Sigmoid colon (tissue), 7 donors: ENCODE measurements at regions of chr6 and their contacts with region 1.

Region 1: GRCh38 chr6:31271641-31272357 is at the start of gene HLA-C:
- DNase-seq: peak; percentile 98
- H3K4me3 ChIP-seq: peak within 1 kb of the TSS; percentile 49 to 95 (median 82)
- H3K27ac ChIP-seq: peak within 1 kb of the TSS; percentile 76 to 98 (median 96)
- H3K4me1 ChIP-seq: peaks cover 0 to 12% (median 3%) of the 10 kb centered on the region in 4 donors
- H3K27me3 ChIP-seq: no peaks in the 10 kb centered on the region
- CTCF ChIP-seq: no peak
- EP300 ChIP-seq: no peak
- POLR2A ChIP-seq: peak in 1 of 2 donors; percentile 91
- total RNA-seq, gene HLA-C: 129 to 351 (median 273) TPM

Region 2: GRCh38 chr6:31139599-31139998 is 132.2 kb before region 1 on chr6:
- intact Hi-C with region 1: loop called (anchors 5 kb)
- DNase-seq: no peak
- H3K4me3 ChIP-seq: no peak overlapping the region
- H3K27ac ChIP-seq: no peak overlapping the region
- H3K4me1 ChIP-seq: peaks cover 0 to 23% (median 12%) of the 10 kb centered on the region in 4 donors
- H3K27me3 ChIP-seq: no peaks in the 10 kb centered on the region
- CTCF ChIP-seq: no peak
- EP300 ChIP-seq: no peak
- POLR2A ChIP-seq: no peak

Region 3: GRCh38 chr6:31197559-31198305 is 74.1 kb before region 1 on chr6:
- intact Hi-C with region 1: loop called (anchors 2 kb)
- DNase-seq: peak; percentile 95
- H3K4me3 ChIP-seq: peak overlapping the region; percentile 60 to 71 (median 66)
- H3K27ac ChIP-seq: peak overlapping the region; percentile 91 to 97 (median 94)
- H3K4me1 ChIP-seq: peaks cover 0 to 21% (median 11%) of the 10 kb centered on the region in 4 donors
- H3K27me3 ChIP-seq: no peaks in the 10 kb centered on the region
- CTCF ChIP-seq: no peak
- EP300 ChIP-seq: peak in 1 of 4 donors; percentile 18
- POLR2A ChIP-seq: peak; percentile 72 to 78

Region 4: GRCh38 chr6:31332637-31333602 is 61.1 kb after region 1 on chr6:
- intact Hi-C with region 1: no loop called
- DNase-seq: no peak
- H3K4me3 ChIP-seq: no peak overlapping the region
- H3K27ac ChIP-seq: no peak overlapping the region
- H3K4me1 ChIP-seq: no peaks in the 10 kb centered on the region
- H3K27me3 ChIP-seq: no peaks in the 10 kb centered on the region
- CTCF ChIP-seq: no peak
- EP300 ChIP-seq: no peak
- POLR2A ChIP-seq: no peak

Region 5: GRCh38 chr6:31356946-31357466 is 85.2 kb after region 1 on chr6 and contains the start of gene HLA-B:
- intact Hi-C with region 1: loop called (anchors 1 kb)
- DNase-seq: peak; percentile 94
- H3K4me3 ChIP-seq: peak within 1 kb of the TSS; percentile 56 to 77 (median 66)
- H3K27ac ChIP-seq: peak within 1 kb of the TSS; percentile 76 to 97 (median 83)
- H3K4me1 ChIP-seq: peaks cover 0 to 16% (median 15%) of the 10 kb centered on the region in 4 donors
- H3K27me3 ChIP-seq: no peaks in the 10 kb centered on the region
- CTCF ChIP-seq: no peak
- EP300 ChIP-seq: no peak
- POLR2A ChIP-seq: peak in 1 of 2 donors; percentile 97
- total RNA-seq, gene HLA-B: 346 to 491 (median 365) TPM